AG04449 (cell line): ENCODE measurements at regions of chr10 and their contacts with region 1.

Region 1: DNA sequence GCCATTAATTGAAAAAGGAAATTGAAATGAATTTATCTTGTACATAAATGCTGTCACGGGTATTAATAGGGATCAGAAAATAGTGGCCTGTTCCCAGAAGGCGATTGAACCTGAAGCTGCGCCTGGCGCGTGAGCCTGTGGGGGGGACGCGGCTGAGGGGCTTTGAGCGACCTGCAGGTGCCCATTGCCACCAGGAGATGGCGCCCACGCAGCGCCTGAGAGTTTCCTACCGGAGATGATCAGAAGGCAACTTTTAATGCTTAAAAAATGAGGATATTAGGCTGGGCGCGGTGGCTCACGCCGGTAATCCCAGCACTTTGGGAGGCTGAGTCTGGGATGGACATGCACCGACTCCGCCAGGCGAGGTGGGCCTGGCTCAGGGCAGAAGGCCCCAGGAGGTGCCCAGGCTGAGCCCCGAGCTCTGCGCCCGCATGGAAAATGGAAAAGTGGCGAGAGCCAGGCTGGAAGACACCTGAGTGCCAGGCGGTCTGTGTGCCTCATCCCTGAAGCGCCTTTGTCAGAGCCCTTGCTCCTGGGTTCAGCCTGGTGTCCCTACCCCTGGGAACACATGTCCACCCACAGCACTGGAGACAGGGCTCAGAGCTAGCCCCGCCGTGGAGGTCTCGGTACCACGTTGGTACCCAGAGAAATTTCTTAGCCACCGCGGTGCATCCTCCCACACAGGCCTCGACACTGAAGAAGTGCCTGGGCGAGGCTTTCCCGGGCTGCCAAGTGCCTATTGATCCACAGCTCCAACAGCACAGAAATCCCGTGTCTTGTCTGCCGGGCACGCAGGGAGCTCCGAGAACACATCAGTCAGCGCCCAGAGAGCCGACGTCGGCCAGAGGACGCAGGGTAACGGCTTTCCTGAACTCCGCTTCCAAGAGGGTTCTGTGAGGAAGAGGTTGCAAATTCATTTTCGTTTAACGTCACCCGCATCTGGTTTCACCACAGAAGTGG is 117.4 kb downstream of the INPP5A start:
- DNase-seq: no peak
- H3K4me3 ChIP-seq: no peak overlapping the region
- CTCF ChIP-seq: peak; percentile 97

Region 2: DNA sequence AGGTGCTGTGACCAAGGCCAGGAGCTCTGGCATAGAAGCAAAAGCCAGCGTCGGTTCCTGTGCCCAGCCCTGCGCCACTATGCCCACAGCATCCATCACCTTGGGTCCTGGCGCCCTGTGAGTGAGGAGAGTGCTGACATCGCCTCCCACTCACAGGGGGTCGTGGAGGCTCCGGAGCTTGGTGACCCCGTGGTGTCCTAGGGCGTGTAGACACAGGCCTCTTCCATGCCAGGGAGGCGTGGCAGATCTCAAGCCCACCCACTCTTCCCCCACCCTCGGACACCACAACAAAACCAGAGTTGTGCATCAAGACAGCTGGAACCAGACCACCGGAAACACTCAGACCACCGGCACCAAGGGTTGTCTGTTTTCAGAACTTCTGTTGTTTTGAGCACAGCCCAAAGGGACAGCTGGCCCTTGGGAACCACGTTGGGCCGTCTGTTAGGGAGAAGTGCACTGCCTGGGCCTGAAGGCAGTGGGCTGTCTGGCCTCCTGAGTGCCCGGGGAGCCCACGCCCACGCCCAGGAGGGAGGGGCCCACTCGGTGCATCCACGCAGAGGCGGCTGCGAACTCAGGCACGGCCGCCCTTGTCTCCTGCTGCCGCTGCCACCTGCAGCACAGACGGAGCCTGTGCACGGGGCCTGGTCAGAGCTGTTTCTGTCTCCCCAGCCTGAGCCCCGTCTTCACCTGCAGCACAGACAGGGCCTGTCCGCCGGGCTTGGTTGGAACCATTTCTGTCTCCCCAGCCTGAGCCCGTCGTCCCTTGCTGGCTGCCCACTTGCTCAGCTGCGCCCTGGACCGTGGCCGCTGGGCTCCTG is 11.1 kb before region 1 on chr10:
- CTCF ChIA-PET with region 1: interaction called, 31 read pairs
- POLR2A ChIA-PET with region 1: no interaction called
- DNase-seq: no peak
- H3K4me3 ChIP-seq: no peak overlapping the region
- CTCF ChIP-seq: no peak

Region 3: GRCh38 chr10:132665946-132666704 is 11.1 kb after region 1 on chr10:
- CTCF ChIA-PET with region 1: interaction called, 32 read pairs
- POLR2A ChIA-PET with region 1: no interaction called
- DNase-seq: peak; percentile 60
- H3K4me3 ChIP-seq: no peak overlapping the region
- CTCF ChIP-seq: no peak

Region 4: GRCh38 chr10:132693676-132694075 is 38.7 kb after region 1 on chr10:
- CTCF ChIA-PET with region 1: interaction called, 13 read pairs
- POLR2A ChIA-PET with region 1: no interaction called
- DNase-seq: no peak
- H3K4me3 ChIP-seq: no peak overlapping the region
- CTCF ChIP-seq: no peak